ENCODE measurements at regions of chr21 and their contacts with region 1.

Region 1: DNA sequence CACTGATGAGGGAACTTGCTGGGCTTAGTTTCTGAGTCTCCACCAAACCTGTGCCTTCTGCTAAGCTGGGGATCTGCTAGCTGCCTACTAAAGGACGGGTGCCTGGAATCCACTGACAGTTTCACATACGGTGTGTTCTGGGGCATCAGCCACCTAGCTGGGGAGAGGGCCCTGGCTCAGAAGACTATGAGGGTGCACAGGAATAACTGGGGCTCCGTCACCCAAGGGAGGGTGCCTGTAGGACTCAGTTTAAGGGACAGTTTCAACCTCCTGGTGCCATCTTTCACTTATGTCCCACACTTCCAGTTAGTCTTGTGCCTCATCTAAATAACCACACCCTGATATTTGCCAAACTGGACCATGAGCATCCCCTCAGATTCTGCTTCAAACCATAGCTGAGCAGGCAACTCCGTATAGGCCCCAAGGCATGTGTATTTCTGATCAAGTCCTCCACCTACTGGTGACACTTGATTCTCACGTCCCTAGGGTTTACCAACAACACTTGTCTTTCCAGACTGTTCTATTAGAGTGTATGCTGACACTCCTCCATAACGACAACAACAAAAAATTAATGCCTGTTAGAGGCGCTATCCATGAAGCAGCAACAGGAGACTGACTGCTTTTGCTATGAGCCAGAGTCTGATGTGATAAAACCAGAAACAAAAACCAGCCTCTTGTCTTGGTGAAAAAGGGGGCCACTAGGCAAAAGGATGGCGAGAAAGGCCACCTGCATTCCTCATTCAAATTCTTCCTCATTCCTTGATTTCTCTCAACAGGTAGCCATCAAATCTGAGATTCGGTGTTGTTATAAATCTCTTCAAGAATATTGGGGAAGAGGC is 55.0 kb upstream of the PAXBP1 start:
- DNase-seq: peak; percentile 20
- H3K4me3 Mint-ChIP-seq: no peak overlapping the region
- H3K27ac Mint-ChIP-seq: no peak overlapping the region
- H3K4me1 Mint-ChIP-seq: no peaks in the 10 kb centered on the region
- H3K27me3 Mint-ChIP-seq: peaks cover 10% of the 10 kb centered on the region

Region 2: DNA sequence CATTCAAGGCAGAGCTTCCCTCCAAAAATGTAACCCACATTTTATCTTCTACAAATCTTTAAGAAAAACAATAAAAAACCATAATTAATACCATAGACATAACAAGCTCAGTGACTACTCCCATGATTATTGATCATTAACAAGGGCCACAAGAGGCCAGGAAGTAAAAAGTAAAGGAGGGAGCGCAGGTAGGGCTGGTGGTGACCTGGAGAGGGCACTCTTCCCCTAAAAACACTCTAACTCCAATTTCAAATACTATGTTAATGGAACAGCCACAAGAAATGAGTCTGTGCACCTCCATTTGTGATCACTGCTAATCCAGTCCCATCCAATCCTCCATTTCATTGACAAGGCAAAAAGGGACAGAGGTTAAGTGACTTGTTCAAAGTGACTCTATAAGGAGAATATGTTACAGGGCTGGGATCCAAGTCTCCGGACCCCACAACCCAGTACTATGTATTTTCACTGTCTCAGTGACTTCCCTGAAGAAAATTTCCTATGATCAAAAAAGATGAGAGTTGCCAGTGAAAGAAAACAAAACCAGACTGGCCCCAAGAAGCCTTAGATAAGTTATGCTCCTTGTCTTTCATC is 173.1 kb before region 1 on chr21:
- intact Hi-C with region 1: loop called (anchors 2 kb)
- DNase-seq: no peak
- H3K4me3 Mint-ChIP-seq: no peak overlapping the region
- H3K27ac Mint-ChIP-seq: no peak overlapping the region
- H3K4me1 Mint-ChIP-seq: peaks cover 24% of the 10 kb centered on the region
- H3K27me3 Mint-ChIP-seq: no peaks in the 10 kb centered on the region

Region 3: GRCh38 chr21:32886339-32886738 is 59.8 kb after region 1 on chr21:
- intact Hi-C with region 1: no loop called
- DNase-seq: no peak
- H3K4me3 Mint-ChIP-seq: peak overlapping the region; percentile 20
- H3K27ac Mint-ChIP-seq: no peak overlapping the region
- H3K4me1 Mint-ChIP-seq: no peaks in the 10 kb centered on the region
- H3K27me3 Mint-ChIP-seq: peaks cover 8% of the 10 kb centered on the region

Region 4: GRCh38 chr21:32921632-32922230 is 95.2 kb after region 1 on chr21:
- intact Hi-C with region 1: no loop called
- DNase-seq: no peak
- H3K4me3 Mint-ChIP-seq: no peak overlapping the region
- H3K27ac Mint-ChIP-seq: no peak overlapping the region
- H3K4me1 Mint-ChIP-seq: peaks cover 2% of the 10 kb centered on the region
- H3K27me3 Mint-ChIP-seq: peaks cover 15% of the 10 kb centered on the region

Measured in activated T-helper 2 cell treated with anti-CD3 and anti-CD28 coated beads, Interferon-gamma antibody, Interleukin-2, Interleukin-4, amounts not matched to agents 10 μg/mL and 5 μg/mL and 100 μg/mL, durations not matched to agents 14 hours and 24 hours and 36 hours (primary cell).